IMR-90 (cell line): ENCODE measurements at regions of chr13 and their contacts with region 1.

Region 1: GRCh38 chr13:97855570-97856303 is 97.7 kb upstream of the IPO5 start:
- DNase-seq: peak; percentile 86
- ATAC-seq: peak; percentile 88
- H3K4me3 ChIP-seq: no peak overlapping the region
- H3K27ac ChIP-seq: no peak overlapping the region
- H3K4me1 ChIP-seq: peaks cover 6% of the 10 kb centered on the region
- H3K27me3 ChIP-seq: no peaks in the 10 kb centered on the region
- CTCF ChIP-seq: peak; percentile 89
- POLR2A ChIP-seq: peak; percentile 39; the same call in 1 of the 2 replicates
- RAD21 ChIP-seq: peak; percentile 99

Region 2: DNA sequence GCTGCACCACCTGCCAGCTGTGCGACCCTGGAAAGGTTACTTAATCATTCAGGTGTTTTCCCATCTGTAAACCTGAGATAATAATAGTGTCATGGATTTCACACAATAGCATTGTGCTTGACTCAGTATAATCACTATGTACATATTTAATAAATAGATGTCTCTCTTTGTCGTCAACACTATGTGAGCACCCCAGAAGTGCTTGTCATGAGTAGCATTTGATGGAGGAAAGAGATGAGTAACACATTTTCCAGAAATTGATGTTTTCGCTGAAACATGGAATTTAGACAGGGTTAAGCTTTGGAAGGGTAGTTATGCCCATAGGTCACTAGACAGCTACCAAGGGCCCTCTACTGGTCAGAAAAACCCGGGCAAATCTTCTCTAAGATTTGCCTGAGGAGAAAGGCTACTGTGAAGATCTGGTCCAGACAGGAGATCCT is 643.1 kb before region 1 on chr13:
- CTCF ChIA-PET with region 1: no interaction called
- POLR2A ChIA-PET with region 1: no interaction called
- dilution Hi-C with region 1: no loop called
- in situ Hi-C with region 1: no loop called
- intact Hi-C with region 1: no loop called
- DNase-seq: peak; percentile 49
- ATAC-seq: peak; percentile 91
- H3K4me3 ChIP-seq: no peak overlapping the region
- H3K27ac ChIP-seq: no peak overlapping the region
- H3K4me1 ChIP-seq: peaks cover 7% of the 10 kb centered on the region
- H3K27me3 ChIP-seq: no peaks in the 10 kb centered on the region
- CTCF ChIP-seq: peak; percentile 71
- POLR2A ChIP-seq: no peak
- RAD21 ChIP-seq: peak; percentile 73

Region 3: DNA sequence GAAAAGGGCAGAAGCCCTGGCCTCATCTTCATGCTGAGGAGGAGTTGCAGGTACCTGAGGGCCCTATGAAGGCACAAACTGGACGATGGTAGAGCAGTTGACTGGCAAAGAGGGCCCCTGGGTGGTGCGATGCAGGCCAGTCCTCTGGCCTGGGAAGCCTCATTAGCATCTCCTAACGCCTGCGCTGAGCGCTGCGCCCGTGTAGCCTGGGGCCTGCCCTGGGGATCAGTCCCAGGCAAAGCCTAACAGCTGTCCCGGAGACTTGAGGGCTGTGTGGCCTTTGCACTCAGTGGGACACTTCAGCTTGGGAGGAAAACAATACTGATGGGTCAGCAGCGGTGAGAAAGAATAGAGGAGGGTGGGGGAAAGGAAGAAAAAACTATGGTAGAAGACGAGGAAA is 234.1 kb before region 1 on chr13:
- CTCF ChIA-PET with region 1: no interaction called
- POLR2A ChIA-PET with region 1: no interaction called
- dilution Hi-C with region 1: no loop called
- in situ Hi-C with region 1: no loop called
- intact Hi-C with region 1: no loop called
- DNase-seq: no peak
- ATAC-seq: no peak
- H3K4me3 ChIP-seq: no peak overlapping the region
- H3K27ac ChIP-seq: no peak overlapping the region
- H3K4me1 ChIP-seq: no peaks in the 10 kb centered on the region
- H3K27me3 ChIP-seq: peaks cover 24% of the 10 kb centered on the region
- CTCF ChIP-seq: no peak
- POLR2A ChIP-seq: no peak
- RAD21 ChIP-seq: no peak

Region 4: DNA sequence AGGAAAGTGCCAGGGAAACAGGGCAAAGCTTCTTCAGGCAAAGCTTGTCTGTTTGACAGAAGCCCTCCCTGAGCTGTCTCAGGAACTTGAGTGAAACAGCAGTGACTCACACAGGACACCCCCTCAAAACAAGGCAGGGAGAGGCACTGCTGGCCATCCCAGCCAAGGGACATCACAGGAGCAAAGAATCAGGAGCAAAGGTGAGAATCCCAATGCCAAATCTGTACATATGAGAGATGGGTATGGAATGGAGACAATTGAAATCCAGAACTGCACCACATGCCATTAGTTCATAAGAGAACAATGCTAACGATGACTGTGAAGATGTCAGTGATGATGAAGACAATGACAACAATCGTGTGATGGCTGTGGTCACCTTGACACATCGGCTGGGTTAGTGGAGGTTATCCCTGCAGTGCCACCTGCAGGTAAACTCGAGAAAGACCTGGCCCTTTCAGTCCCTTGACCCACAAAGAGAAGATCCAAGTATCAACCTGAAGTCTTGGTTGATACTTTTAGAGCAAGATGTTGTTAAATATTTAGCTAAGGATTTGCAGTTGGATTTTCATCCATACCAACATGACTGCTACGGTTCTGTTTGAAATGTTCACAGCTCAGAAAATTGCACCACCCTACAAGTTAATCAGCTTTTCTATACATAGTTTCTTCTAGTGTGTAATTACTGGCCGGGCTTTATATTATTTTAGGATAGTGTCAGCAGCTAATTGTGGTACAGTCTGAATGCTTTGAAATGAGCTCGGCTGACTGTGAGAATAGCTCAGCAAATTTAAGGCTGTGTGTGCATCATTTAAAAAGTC is 55.8 kb after region 1 on chr13:
- CTCF ChIA-PET with region 1: no interaction called
- POLR2A ChIA-PET with region 1: no interaction called
- dilution Hi-C with region 1: no loop called
- in situ Hi-C with region 1: no loop called
- intact Hi-C with region 1: loop called (anchors 5 kb)
- DNase-seq: peak; percentile 32
- ATAC-seq: no peak
- H3K4me3 ChIP-seq: no peak overlapping the region
- H3K27ac ChIP-seq: no peak overlapping the region
- H3K4me1 ChIP-seq: no peaks in the 10 kb centered on the region
- H3K27me3 ChIP-seq: no peaks in the 10 kb centered on the region; the same call in 1 of the 2 replicates
- CTCF ChIP-seq: peak; percentile 30
- POLR2A ChIP-seq: no peak
- RAD21 ChIP-seq: peak; percentile 47

Region 5: GRCh38 chr13:98004111-98004510 is 148.4 kb after region 1 on chr13:
- CTCF ChIA-PET with region 1: interaction called, 5 read pairs
- POLR2A ChIA-PET with region 1: no interaction called
- dilution Hi-C with region 1: no loop called
- in situ Hi-C with region 1: no loop called
- intact Hi-C with region 1: loop called (anchors 1 kb)
- DNase-seq: peak; percentile 94
- ATAC-seq: peak; percentile 98
- H3K4me3 ChIP-seq: no peak overlapping the region
- H3K27ac ChIP-seq: peak overlapping the region; percentile 79
- H3K4me1 ChIP-seq: peaks cover 8% of the 10 kb centered on the region
- H3K27me3 ChIP-seq: no peaks in the 10 kb centered on the region
- CTCF ChIP-seq: no peak
- POLR2A ChIP-seq: no peak
- RAD21 ChIP-seq: peak; percentile 5; the same call in 1 of the 2 replicates

Region 6: GRCh38 chr13:98206946-98207345 is 351.2 kb after region 1 on chr13:
- CTCF ChIA-PET with region 1: interaction called, 6 read pairs
- POLR2A ChIA-PET with region 1: no interaction called
- dilution Hi-C with region 1: no loop called
- in situ Hi-C with region 1: no loop called
- intact Hi-C with region 1: loop called (anchors 10 kb)
- DNase-seq: peak; percentile 99
- ATAC-seq: peak; percentile 80
- H3K4me3 ChIP-seq: no peak overlapping the region
- H3K27ac ChIP-seq: no peak overlapping the region
- H3K4me1 ChIP-seq: peaks cover 23% of the 10 kb centered on the region
- H3K27me3 ChIP-seq: no peaks in the 10 kb centered on the region
- CTCF ChIP-seq: no peak
- POLR2A ChIP-seq: no peak
- RAD21 ChIP-seq: peak; percentile 25; the same call in 1 of the 2 replicates

Region 7: GRCh38 chr13:98445340-98446233 is 589.9 kb after region 1 on chr13:
- CTCF ChIA-PET with region 1: no interaction called
- POLR2A ChIA-PET with region 1: no interaction called
- dilution Hi-C with region 1: no loop called
- in situ Hi-C with region 1: loop called (anchors 10 kb)
- intact Hi-C with region 1: loop called (anchors 10 kb)
- DNase-seq: peak; percentile 41
- ATAC-seq: peak; percentile 82
- H3K4me3 ChIP-seq: no peak overlapping the region
- H3K27ac ChIP-seq: no peak overlapping the region
- H3K4me1 ChIP-seq: peaks cover 13% of the 10 kb centered on the region
- H3K27me3 ChIP-seq: no peaks in the 10 kb centered on the region
- CTCF ChIP-seq: peak; percentile 84
- POLR2A ChIP-seq: no peak
- RAD21 ChIP-seq: peak; percentile 86

Region 8: GRCh38 chr13:98643479-98643878 is 787.7 kb after region 1 on chr13:
- CTCF ChIA-PET with region 1: no interaction called
- POLR2A ChIA-PET with region 1: no interaction called
- dilution Hi-C with region 1: no loop called
- in situ Hi-C with region 1: no loop called
- intact Hi-C with region 1: no loop called
- DNase-seq: no peak
- ATAC-seq: no peak
- H3K4me3 ChIP-seq: no peak overlapping the region
- H3K27ac ChIP-seq: no peak overlapping the region
- H3K4me1 ChIP-seq: no peaks in the 10 kb centered on the region
- H3K27me3 ChIP-seq: peaks cover 11% of the 10 kb centered on the region
- CTCF ChIP-seq: no peak
- POLR2A ChIP-seq: no peak
- RAD21 ChIP-seq: no peak

Region 9: DNA sequence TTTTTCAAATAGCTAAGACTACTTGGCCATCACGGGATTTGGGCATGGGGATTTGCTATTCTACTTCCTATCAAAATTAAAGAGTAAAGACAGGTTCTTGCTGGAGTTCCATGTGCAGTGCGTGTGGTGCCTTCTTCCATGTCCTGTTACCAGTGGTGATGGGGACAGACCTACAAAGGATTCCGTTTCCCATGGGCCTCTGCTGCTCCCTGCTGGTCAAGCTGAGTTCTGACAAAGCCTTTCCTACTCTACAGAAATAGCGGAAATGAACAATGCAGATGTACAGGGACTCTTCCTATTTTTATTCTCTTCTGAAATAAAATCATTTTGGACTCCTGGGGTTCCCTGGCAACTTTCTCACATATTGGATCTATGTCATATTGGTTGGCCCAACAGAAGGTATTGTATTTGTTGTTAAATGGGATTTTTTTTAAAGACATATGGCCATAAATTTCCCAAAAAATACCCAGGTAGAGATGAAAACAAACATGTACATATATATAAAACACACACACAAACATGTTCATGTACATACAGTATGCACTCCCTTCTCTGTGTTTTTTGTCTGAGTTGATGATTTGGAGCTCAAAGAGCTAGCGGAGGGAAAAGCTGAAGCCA is 987.2 kb after region 1 on chr13:
- CTCF ChIA-PET with region 1: no interaction called
- POLR2A ChIA-PET with region 1: no interaction called
- dilution Hi-C with region 1: no loop called
- in situ Hi-C with region 1: loop called (anchors 25 kb)
- intact Hi-C with region 1: loop called (anchors 10 kb)
- DNase-seq: peak; percentile 80
- ATAC-seq: peak; percentile 89
- H3K4me3 ChIP-seq: no peak overlapping the region
- H3K27ac ChIP-seq: no peak overlapping the region
- H3K4me1 ChIP-seq: peaks cover 4% of the 10 kb centered on the region; the same call in 1 of the 2 replicates
- H3K27me3 ChIP-seq: no peaks in the 10 kb centered on the region
- CTCF ChIP-seq: peak; percentile 88
- POLR2A ChIP-seq: no peak
- RAD21 ChIP-seq: peak; percentile 89